ENCODE measurements at regions of chr7 and their contacts with region 1.

Region 1: DNA sequence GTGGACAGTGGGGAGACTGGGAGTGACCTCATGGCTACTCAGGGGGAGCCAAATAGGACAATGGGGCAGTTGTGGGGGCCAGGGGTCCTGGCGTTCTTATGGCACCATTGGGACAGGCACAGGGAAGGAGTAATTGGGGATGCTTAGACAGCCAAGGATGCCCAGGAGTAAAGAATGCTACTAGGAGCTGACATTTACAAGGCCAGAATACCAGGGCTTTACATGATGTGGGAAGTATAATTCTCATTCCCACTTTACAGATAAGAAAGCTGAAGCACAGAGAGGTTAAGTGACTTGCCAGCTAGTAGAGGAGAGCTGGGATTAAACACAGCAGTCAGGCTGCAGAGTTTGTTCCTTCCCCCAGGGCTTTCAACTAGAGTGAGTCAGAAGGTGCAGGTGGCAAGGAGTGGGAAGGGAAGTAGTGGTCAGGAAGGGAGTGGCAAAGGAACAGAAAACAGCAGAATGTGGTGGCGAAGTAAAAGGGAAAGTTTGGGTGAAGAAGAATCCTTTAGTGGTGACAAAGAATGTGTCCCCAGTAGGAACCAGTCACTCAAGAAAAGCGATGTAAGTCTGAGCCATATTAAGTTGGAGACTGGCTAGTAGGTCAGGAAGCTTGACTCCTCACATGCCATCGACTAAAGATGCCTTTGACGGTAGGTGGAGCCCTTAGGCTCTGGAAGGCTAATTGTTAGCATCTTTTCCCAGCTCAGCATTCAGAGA is 32.8 kb downstream of the CPVL start:
- DNase-seq: peak; percentile 40
- H3K4me3 ChIP-seq: no peak overlapping the region
- H3K27ac ChIP-seq: no peak overlapping the region
- H3K4me1 ChIP-seq: peaks cover 5% of the 10 kb centered on the region
- H3K27me3 ChIP-seq: no peaks in the 10 kb centered on the region
- CTCF ChIP-seq: peak in 1 of 3 experiments; percentile 16
- POLR2A ChIP-seq: no peak

Region 2: DNA sequence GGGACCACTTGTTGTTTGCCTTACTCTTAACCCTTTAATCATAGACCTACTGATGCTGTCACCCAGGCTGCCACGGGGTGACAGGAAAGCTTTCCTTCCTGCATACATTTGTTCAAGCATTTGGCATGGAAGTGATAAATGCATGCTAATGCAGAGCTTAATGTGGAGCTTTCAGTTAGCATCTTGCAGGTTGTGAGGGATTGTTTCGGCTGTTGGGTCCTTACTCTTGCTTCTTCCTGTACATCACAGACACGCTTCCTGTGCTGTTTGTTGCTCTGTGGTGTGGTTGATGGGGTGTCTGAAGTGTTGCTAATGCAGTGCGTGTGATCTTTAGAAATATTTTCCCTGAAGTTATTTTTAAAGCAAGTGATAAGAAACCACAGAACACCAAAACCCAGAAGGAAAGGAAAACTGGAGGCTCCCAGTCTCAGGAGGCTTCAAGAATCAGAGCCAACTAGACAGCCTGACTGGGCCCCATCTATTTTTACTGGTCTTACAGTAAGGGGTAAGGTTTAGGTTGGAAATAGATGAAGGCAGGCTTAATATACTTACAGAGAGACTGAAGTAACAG is 224.1 kb after region 1 on chr7:
- intact Hi-C with region 1: no loop called
- DNase-seq: no peak
- H3K4me3 ChIP-seq: no peak overlapping the region
- H3K27ac ChIP-seq: no peak overlapping the region
- H3K4me1 ChIP-seq: no peaks in the 10 kb centered on the region
- H3K27me3 ChIP-seq: no peaks in the 10 kb centered on the region
- CTCF ChIP-seq: no peak
- POLR2A ChIP-seq: no peak

Region 3: GRCh38 chr7:29401769-29402168 is 288.2 kb after region 1 on chr7:
- intact Hi-C with region 1: loop called (anchors 5 kb)
- DNase-seq: no peak
- H3K4me3 ChIP-seq: no peak overlapping the region
- H3K27ac ChIP-seq: no peak overlapping the region
- H3K4me1 ChIP-seq: no peaks in the 10 kb centered on the region
- H3K27me3 ChIP-seq: no peaks in the 10 kb centered on the region
- CTCF ChIP-seq: no peak
- POLR2A ChIP-seq: no peak

Region 4: GRCh38 chr7:29557954-29558353 is 444.4 kb after region 1 on chr7:
- intact Hi-C with region 1: no loop called
- DNase-seq: no peak
- H3K4me3 ChIP-seq: no peak overlapping the region
- H3K27ac ChIP-seq: no peak overlapping the region
- H3K4me1 ChIP-seq: no peaks in the 10 kb centered on the region
- H3K27me3 ChIP-seq: no peaks in the 10 kb centered on the region
- CTCF ChIP-seq: no peak
- POLR2A ChIP-seq: no peak

Measured in testis (tissue), 5 donors.